ENCODE measurements at regions of chr1 and their contacts with region 1.

Region 1: GRCh38 chr1:45704637-45705036 is 16.7 kb downstream of the TMEM69 start:
- DNase-seq: no peak
- ATAC-seq: no peak
- H3K4me3 ChIP-seq: no peak overlapping the region
- H3K4me3 Mint-ChIP-seq: no peak overlapping the region
- H3K27ac ChIP-seq: no peak overlapping the region
- H3K27ac Mint-ChIP-seq: no peak overlapping the region
- H3K4me1 ChIP-seq: no peaks in the 10 kb centered on the region
- H3K4me1 Mint-ChIP-seq: no peaks in the 10 kb centered on the region
- H3K27me3 ChIP-seq: no peaks in the 10 kb centered on the region
- H3K27me3 Mint-ChIP-seq: no peaks in the 10 kb centered on the region
- CTCF ChIP-seq: no peak

Region 2: DNA sequence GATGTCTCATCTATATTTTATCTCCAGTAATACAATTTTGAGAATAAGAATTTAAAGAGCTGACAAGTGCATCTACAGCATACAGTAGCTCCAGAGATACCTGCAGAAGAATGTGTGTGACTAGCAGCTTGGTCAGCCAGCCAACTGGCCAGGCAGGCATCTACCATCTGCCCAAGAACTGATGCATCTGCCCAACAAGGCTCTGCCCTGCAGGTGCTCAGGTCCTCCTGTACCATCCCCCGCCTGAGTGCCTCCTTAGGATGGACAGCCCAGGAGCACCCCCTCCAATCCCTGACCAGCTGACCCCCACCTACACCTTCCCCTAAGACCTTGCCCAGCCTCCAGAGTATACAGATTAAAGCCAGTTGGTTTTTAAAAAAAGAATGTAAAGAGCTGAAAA is 13.7 kb after region 1 on chr1:
- CTCF ChIA-PET with region 1: no interaction called
- POLR2A ChIA-PET with region 1: no interaction called
- intact Hi-C with region 1: loop called in 1 of 2 experiments (anchors 1 kb)
- DNase-seq: no peak
- ATAC-seq: no peak
- H3K4me3 ChIP-seq: no peak overlapping the region
- H3K4me3 Mint-ChIP-seq: no peak overlapping the region
- H3K27ac ChIP-seq: no peak overlapping the region
- H3K27ac Mint-ChIP-seq: no peak overlapping the region
- H3K4me1 ChIP-seq: no peaks in the 10 kb centered on the region
- H3K4me1 Mint-ChIP-seq: no peaks in the 10 kb centered on the region
- H3K27me3 ChIP-seq: no peaks in the 10 kb centered on the region
- H3K27me3 Mint-ChIP-seq: no peaks in the 10 kb centered on the region
- CTCF ChIP-seq: no peak

Region 3: GRCh38 chr1:45820173-45820572 is 115.5 kb after region 1 on chr1:
- CTCF ChIA-PET with region 1: no interaction called
- POLR2A ChIA-PET with region 1: no interaction called
- intact Hi-C with region 1: loop called in 1 of 2 experiments (anchors 5 kb)
- DNase-seq: peak in 1 of 9 experiments; percentile 14
- ATAC-seq: no peak
- H3K4me3 ChIP-seq: no peak overlapping the region
- H3K4me3 Mint-ChIP-seq: no peak overlapping the region
- H3K27ac ChIP-seq: no peak overlapping the region
- H3K27ac Mint-ChIP-seq: no peak overlapping the region
- H3K4me1 ChIP-seq: no peaks in the 10 kb centered on the region
- H3K4me1 Mint-ChIP-seq: peaks cover 4% of the 10 kb centered on the region
- H3K27me3 ChIP-seq: no peaks in the 10 kb centered on the region
- H3K27me3 Mint-ChIP-seq: no peaks in the 10 kb centered on the region
- CTCF ChIP-seq: no peak

Region 4: DNA sequence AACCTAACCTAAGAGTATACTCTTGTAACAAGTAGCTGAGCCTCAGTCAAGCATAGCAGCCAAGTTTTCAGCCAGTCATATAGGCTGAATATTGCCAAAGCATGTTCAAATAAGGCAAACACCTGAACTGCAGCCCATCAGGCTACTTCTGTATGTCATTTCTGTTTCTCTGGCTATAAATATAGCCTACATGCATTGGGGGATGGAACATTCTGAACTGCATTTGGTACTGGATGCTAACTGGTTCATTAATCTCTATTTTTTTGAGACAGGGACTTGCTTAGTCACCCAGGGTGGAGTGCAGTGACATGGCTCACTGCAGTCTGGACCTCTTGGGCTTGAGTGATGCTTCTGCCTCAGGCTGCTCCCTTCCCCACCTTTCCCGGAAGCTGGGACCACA is 136.1 kb after region 1 on chr1:
- CTCF ChIA-PET with region 1: no interaction called
- POLR2A ChIA-PET with region 1: no interaction called
- intact Hi-C with region 1: no loop called
- DNase-seq: no peak
- ATAC-seq: no peak
- H3K4me3 ChIP-seq: no peak overlapping the region
- H3K4me3 Mint-ChIP-seq: no peak overlapping the region
- H3K27ac ChIP-seq: no peak overlapping the region
- H3K27ac Mint-ChIP-seq: no peak overlapping the region
- H3K4me1 ChIP-seq: no peaks in the 10 kb centered on the region
- H3K4me1 Mint-ChIP-seq: no peaks in the 10 kb centered on the region
- H3K27me3 ChIP-seq: no peaks in the 10 kb centered on the region
- H3K27me3 Mint-ChIP-seq: no peaks in the 10 kb centered on the region
- CTCF ChIP-seq: no peak

Measured in CD8-positive, alpha-beta T cell (primary cell).